ENCODE measurements at regions of chr1 and their contacts with region 1.

Region 1: DNA sequence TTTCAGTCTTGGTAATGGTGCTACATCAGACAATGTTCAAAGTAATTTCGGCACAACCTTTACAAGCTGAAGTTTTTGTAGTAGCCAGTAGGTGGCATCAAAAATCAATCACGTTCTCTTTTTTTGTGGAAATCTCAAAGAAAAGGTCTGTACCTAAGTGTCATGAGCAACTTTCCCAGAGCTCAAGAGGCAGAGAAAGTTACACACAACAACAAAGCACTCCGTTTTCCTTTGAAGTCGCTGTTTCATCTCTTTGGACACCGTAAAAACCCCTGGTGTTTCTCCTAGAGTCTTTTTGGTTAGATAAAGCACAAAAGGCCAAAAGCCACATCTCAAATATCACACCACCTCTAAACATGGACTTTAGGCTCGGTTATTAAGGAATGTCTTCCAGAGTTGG is 131.6 kb downstream of the LHX8 start:
- DNase-seq: no peak
- ATAC-seq: peak; percentile 84
- H3K4me3 Mint-ChIP-seq: no peak overlapping the region
- H3K27ac Mint-ChIP-seq: no peak overlapping the region
- H3K4me1 Mint-ChIP-seq: no peaks in the 10 kb centered on the region
- H3K27me3 Mint-ChIP-seq: no peaks in the 10 kb centered on the region
- CTCF ChIP-seq: no peak

Region 2: DNA sequence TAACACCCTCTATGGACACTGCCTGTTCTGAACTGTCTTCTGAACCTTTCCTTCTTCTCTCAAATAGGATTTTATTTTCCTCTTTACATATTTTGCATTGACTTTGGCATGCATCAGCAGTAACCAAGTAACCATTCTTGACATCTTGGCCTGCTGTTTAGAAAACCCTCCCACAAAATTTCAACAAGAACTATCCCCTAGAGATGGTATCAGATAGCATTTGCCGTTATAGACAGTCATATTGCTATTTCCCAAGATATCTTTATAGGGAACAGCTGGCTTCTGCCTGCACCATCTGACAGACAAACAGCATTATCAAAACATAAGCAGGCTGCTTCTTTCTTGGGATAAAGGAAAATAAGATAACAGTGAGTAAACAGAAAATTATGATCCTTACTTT is 76.9 kb before region 1 on chr1:
- CTCF ChIA-PET with region 1: no interaction called
- POLR2A ChIA-PET with region 1: no interaction called
- DNase-seq: no peak
- ATAC-seq: no peak
- H3K4me3 Mint-ChIP-seq: no peak overlapping the region
- H3K27ac Mint-ChIP-seq: no peak overlapping the region
- H3K4me1 Mint-ChIP-seq: peaks cover 4% of the 10 kb centered on the region; the same call in 1 of the 2 replicates
- H3K27me3 Mint-ChIP-seq: no peaks in the 10 kb centered on the region
- CTCF ChIP-seq: no peak

Region 3: GRCh38 chr1:75276385-75276784 is 10.6 kb after region 1 on chr1:
- CTCF ChIA-PET with region 1: interaction called, 11 read pairs
- POLR2A ChIA-PET with region 1: no interaction called
- DNase-seq: no peak
- ATAC-seq: no peak
- H3K4me3 Mint-ChIP-seq: no peak overlapping the region
- H3K27ac Mint-ChIP-seq: no peak overlapping the region
- H3K4me1 Mint-ChIP-seq: no peaks in the 10 kb centered on the region
- H3K27me3 Mint-ChIP-seq: no peaks in the 10 kb centered on the region
- CTCF ChIP-seq: no peak